ENCODE measurements at regions of chr2 and their contacts with region 1.

Region 1: GRCh38 chr2:95121407-95122196 is at the start of gene MRPS5:
- DNase-seq: peak; percentile 88 to 95 (median 90)
- ATAC-seq: peak; percentile 93 to 99 (median 98)
- H3K4me3 ChIP-seq: peak within 1 kb of the TSS; percentile 60 to 100 (median 88)
- H3K27ac ChIP-seq: peak within 1 kb of the TSS; percentile 85 to 99 (median 96)
- H3K4me1 ChIP-seq: peaks cover 0 to 42% (median 26%) of the 10 kb centered on the region in 12 donors
- H3K27me3 ChIP-seq: no peaks in the 10 kb centered on the region
- CTCF ChIP-seq: peak in 4 of 12 donors; percentile 18 to 46 (median 26)
- POLR2A ChIP-seq: peak in 1 of 2 donors; percentile 86
- total RNA-seq, gene MRPS5: 52.4 to 80.0 (median 69.7) TPM

Region 2: DNA sequence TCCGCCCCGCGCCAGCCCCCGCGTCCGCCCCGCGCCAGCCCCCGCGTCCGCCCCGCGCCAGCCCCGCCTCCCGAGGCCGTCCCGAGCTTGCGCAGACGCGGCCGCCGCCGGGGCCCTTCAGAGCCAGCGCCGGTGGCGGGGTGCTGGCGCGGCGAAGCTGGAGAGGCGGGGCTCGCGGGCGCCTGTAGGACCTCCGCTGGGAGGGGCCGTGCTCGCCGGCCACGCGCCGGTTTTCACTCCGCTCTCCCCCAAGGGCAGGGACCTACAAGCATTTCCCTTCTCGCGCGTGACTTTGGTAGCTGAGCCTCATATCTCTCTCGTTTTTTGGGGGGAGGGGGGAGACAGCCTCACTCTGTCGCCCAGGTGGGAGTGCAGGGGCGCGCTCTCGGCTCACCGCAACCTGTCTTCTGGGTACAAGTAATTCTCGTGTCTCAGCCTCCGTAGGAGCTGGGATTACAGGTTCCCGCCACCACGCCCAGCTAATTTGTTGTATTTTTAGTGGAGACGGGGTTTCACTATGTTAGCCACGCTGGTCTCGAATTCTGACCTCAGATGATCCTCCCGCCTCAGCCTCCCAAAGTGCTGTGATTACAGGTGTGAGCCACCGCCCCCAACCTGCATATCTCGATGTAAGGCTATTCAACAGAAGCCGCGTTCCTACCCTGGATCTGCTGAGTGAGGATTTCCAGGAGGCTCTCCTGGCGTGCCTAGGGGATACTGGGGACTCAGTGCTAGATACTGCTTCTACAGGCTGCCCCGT is 38.3 kb after region 1 on chr2 and contains the start of gene ZNF514:
- intact Hi-C with region 1: loop called in 4 of 10 experiments (anchors 2 to 5 kb)
- DNase-seq: peak; percentile 79 to 90 (median 87)
- ATAC-seq: peak; percentile 68 to 93 (median 91)
- H3K4me3 ChIP-seq: peak within 1 kb of the TSS; percentile 50 to 93 (median 81)
- H3K27ac ChIP-seq: peak within 1 kb of the TSS; percentile 35 to 91 (median 80)
- H3K4me1 ChIP-seq: peaks cover 5 to 36% (median 22%) of the 10 kb centered on the region in 12 donors
- H3K27me3 ChIP-seq: no peaks in the 10 kb centered on the region
- CTCF ChIP-seq: no peak
- POLR2A ChIP-seq: peak in 1 of 2 donors; percentile 33
- total RNA-seq, gene ZNF514: 6.1 to 16.8 (median 11.2) TPM

Region 3: GRCh38 chr2:95345566-95346230 is 224.1 kb after region 1 on chr2:
- intact Hi-C with region 1: loop called in 1 of 10 experiments (anchors 5 kb)
- DNase-seq: peak; percentile 78 to 92 (median 86)
- ATAC-seq: peak; percentile 81 to 93 (median 90)
- H3K4me3 ChIP-seq: peak overlapping the region; percentile 42 to 86 (median 67)
- H3K27ac ChIP-seq: peak overlapping the region in 11 of 12 donors; percentile 49 to 89 (median 79)
- H3K4me1 ChIP-seq: peaks cover 0 to 31% (median 9%) of the 10 kb centered on the region in 12 donors
- H3K27me3 ChIP-seq: peaks cover 0 to 34% (median 5%) of the 10 kb centered on the region in 9 donors
- CTCF ChIP-seq: peak; percentile 84 to 97 (median 92)
- POLR2A ChIP-seq: no peak